Thyroid gland (tissue), 4 donors: ENCODE measurements at regions of chr1 and their contacts with region 1.

Region 1: DNA sequence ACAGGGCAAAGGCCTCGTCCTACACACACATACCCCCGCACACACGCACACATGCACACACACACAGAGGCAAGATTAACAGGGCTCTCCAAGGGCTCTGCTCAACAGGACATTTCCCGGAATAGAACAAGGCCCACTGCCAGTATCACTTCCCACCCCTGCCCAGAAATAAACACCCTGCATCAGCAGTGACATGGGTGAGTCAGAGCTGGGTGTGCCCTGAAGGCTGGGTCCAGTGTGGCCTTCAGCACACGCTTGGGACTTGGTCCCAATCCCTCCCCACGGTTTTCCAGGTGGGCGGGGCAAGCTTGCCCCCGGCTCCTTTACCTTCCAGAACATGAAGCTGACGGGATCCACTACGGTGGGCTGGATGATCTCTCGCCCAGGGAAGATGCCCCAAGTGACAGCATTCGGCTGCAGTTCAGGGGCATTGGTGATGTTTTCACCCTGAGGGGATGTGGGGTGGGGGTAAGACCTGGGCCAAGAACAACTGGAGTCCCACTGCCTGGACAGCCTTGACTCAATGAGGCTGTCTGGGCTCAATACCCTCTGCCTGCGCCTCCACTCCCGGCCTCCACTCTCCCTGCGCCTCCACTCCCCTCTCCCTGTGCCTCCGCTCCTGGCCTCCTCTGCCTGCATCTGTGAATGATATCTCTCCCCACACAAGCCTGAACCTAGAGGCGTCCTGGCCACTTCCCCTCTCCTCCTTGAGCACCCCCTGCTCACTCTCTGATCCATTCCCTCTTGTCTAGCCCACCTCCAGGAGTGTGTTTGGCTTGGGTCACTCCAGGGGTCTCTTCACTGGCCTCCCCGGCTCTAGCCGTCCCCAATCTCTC is 14.7 kb downstream of the MTHFR start:
- DNase-seq: peak; percentile 63 to 65
- H3K4me3 ChIP-seq: no peak overlapping the region
- H3K27ac ChIP-seq: peak overlapping the region; percentile 78 to 97 (median 97)
- H3K4me1 ChIP-seq: peaks cover 59 to 81% of the 10 kb centered on the region in 2 donors
- H3K27me3 ChIP-seq: no peaks in the 10 kb centered on the region
- CTCF ChIP-seq: no peak
- POLR2A ChIP-seq: peak in 1 of 2 donors; percentile 47

Region 2: DNA sequence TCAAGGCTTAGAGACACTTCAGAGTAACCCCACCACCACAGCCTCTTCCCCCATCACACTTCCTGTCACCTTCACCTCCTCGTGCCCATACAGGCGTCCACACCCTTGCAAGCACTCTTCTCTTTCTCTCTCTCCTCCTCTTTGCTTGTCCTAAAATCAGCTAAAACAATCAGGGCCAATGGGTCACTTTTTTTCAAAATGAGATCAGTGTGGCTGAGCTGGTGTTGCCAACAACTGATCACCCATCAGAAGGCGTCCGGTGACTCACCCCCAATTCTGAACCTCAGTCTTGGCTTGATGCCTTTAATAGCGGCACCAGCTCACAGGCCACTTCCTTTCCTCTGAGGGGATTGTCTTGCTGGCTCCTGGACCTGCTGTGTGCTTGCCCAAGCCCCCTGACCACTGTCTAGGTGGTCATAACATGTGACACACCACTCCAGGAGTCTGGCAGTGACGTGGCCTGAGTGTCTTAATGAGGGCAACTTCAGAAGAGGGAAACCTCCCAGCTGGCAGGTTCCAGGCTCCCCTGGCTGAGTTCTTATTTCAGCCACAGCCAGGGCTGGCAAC is 98.0 kb before region 1 on chr1:
- intact Hi-C with region 1: no loop called
- DNase-seq: no peak
- H3K4me3 ChIP-seq: no peak overlapping the region
- H3K27ac ChIP-seq: no peak overlapping the region
- H3K4me1 ChIP-seq: peaks cover 0 to 22% of the 10 kb centered on the region in 2 donors
- H3K27me3 ChIP-seq: peaks cover 16% of the 10 kb centered on the region
- CTCF ChIP-seq: no peak
- POLR2A ChIP-seq: no peak

Region 3: GRCh38 chr1:11735854-11736745 is 55.0 kb before region 1 on chr1 and contains the start of gene AGTRAP:
- intact Hi-C with region 1: loop called (anchors 5 kb)
- DNase-seq: peak; percentile 96 to 97
- H3K4me3 ChIP-seq: peak within 1 kb of the TSS; percentile 42 to 98 (median 95)
- H3K27ac ChIP-seq: peak within 1 kb of the TSS; percentile 85 to 90 (median 89)
- H3K4me1 ChIP-seq: peaks cover 13 to 40% of the 10 kb centered on the region in 2 donors
- H3K27me3 ChIP-seq: no peaks in the 10 kb centered on the region
- CTCF ChIP-seq: peak in 2 of 6 experiments; percentile 14 to 15
- POLR2A ChIP-seq: peak in 1 of 2 donors; percentile 57
- total RNA-seq, gene AGTRAP: 35.6 to 72.4 (median 63.6) TPM